ENCODE measurements at regions of chr16 and their contacts with region 1.

Region 1: GRCh38 chr16:15757077-15757386 is 99.8 kb downstream of the MYH11 start:
- DNase-seq: no peak
- H3K4me3 ChIP-seq: no peak overlapping the region
- H3K27ac ChIP-seq: no peak overlapping the region
- H3K4me1 ChIP-seq: no peaks in the 10 kb centered on the region
- H3K27me3 ChIP-seq: no peaks in the 10 kb centered on the region; the same call in 1 of the 2 replicates
- CTCF ChIP-seq: no peak

Region 2: DNA sequence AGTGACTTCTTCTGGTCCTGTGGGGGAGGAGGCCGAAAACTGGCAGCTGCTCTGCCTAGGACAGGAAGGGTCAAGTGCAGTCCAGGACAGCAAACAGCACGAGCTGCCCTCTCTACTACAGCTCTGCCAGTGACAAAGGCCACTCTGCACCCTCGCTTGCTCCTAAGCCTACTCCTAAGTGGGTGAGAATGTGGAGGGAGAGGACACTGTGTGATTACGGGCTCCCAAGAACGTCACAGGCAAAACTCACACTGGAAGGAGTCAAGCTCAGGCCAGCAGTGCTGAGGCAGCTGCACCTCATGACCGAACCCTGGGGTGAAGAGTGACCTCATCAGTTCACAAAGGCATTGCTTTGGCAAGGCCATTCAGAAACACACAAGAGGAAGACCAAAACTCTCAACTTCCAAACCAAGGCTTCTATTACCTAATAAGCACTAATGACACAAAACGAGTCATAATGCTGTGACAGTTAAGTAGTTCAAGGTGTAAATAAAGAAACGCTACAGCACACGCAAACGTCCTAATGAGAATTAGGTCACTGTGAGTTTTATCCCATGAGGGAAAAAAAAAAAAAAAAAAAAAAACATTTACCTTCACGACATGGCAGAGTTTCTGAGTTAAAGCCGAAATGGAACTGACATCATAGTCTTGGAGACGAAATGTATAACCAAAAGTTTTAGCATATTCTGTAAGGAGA is 149.2 kb before region 1 on chr16:
- CTCF ChIA-PET with region 1: no interaction called
- POLR2A ChIA-PET with region 1: no interaction called
- intact Hi-C with region 1: no loop called
- DNase-seq: peak in 1 of 2 experiments; percentile 78
- H3K4me3 ChIP-seq: no peak overlapping the region
- H3K27ac ChIP-seq: peak overlapping the region; percentile 60
- H3K4me1 ChIP-seq: peaks cover 38% of the 10 kb centered on the region
- H3K27me3 ChIP-seq: no peaks in the 10 kb centered on the region
- CTCF ChIP-seq: no peak

Region 3: DNA sequence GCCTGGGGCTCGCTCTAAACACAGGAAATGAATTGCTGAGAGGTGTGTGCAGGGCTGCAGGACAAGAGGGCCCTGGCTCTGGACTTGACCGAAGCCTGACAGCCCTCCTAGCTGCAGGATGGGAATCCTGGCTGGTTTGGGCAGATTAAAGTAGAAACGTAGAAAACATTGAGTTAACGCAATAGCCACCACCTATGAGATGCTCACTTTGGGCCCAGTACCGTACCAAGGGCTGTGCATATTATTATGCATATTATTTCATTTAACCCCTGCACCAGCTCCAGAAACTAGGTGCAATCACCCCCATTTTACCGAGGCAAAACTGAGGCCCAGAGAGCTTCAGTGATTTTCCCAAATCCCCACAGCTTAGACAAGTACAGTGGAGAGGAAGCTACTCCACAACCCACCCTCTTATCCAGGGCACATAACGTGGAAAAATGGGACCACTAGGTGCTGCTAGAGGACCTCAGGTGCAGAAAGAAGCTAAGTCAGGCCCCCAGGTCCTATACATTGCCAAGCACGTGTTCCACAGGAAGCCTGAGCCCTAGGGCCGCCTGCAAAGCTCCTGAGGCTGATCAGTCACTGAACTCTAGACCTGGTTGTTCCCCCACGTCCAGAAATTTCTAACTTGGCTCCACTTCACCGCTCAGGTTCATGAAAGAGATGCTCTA is 20.6 kb after region 1 on chr16:
- CTCF ChIA-PET with region 1: no interaction called
- POLR2A ChIA-PET with region 1: no interaction called
- intact Hi-C with region 1: no loop called
- DNase-seq: peak; percentile 50 to 53
- H3K4me3 ChIP-seq: no peak overlapping the region
- H3K27ac ChIP-seq: no peak overlapping the region
- H3K4me1 ChIP-seq: no peaks in the 10 kb centered on the region
- H3K27me3 ChIP-seq: no peaks in the 10 kb centered on the region
- CTCF ChIP-seq: peak; percentile 67

Region 4: GRCh38 chr16:16127469-16128116 is 370.6 kb after region 1 on chr16:
- CTCF ChIA-PET with region 1: interaction called, 11 read pairs
- POLR2A ChIA-PET with region 1: no interaction called
- intact Hi-C with region 1: no loop called
- DNase-seq: peak; percentile 69 to 79
- H3K4me3 ChIP-seq: no peak overlapping the region
- H3K27ac ChIP-seq: no peak overlapping the region
- H3K4me1 ChIP-seq: no peaks in the 10 kb centered on the region
- H3K27me3 ChIP-seq: no peaks in the 10 kb centered on the region
- CTCF ChIP-seq: peak; percentile 93

Region 5: GRCh38 chr16:16183562-16183961 is 426.5 kb after region 1 on chr16:
- CTCF ChIA-PET with region 1: no interaction called
- POLR2A ChIA-PET with region 1: interaction called, 12 read pairs
- intact Hi-C with region 1: no loop called
- DNase-seq: no peak
- H3K4me3 ChIP-seq: no peak overlapping the region
- H3K27ac ChIP-seq: no peak overlapping the region
- H3K4me1 ChIP-seq: no peaks in the 10 kb centered on the region
- H3K27me3 ChIP-seq: no peaks in the 10 kb centered on the region
- CTCF ChIP-seq: no peak; the same call in 1 of the 2 replicates

Measured in PC-9 (cell line).